Activated T-helper 2 cell treated with anti-CD3 and anti-CD28 coated beads, Interferon-gamma antibody, Interleukin-2, Interleukin-4, amounts not matched to agents 10 μg/mL and 5 μg/mL and 100 μg/mL, durations not matched to agents 14 hours and 24 hours and 36 hours (primary cell): ENCODE measurements at regions of chr12 and their contacts with region 1.

Region 1: GRCh38 chr12:27243804-27244683 is at the start of gene STK38L:
- DNase-seq: peak; percentile 96
- H3K4me3 Mint-ChIP-seq: peak within 1 kb of the TSS; percentile 96
- H3K27ac Mint-ChIP-seq: peak within 1 kb of the TSS; percentile 94
- H3K4me1 Mint-ChIP-seq: peaks cover 35% of the 10 kb centered on the region
- H3K27me3 Mint-ChIP-seq: no peaks in the 10 kb centered on the region
- total RNA-seq, gene STK38L: 23.4 and 24.2 TPM in 2 replicates

Region 2: DNA sequence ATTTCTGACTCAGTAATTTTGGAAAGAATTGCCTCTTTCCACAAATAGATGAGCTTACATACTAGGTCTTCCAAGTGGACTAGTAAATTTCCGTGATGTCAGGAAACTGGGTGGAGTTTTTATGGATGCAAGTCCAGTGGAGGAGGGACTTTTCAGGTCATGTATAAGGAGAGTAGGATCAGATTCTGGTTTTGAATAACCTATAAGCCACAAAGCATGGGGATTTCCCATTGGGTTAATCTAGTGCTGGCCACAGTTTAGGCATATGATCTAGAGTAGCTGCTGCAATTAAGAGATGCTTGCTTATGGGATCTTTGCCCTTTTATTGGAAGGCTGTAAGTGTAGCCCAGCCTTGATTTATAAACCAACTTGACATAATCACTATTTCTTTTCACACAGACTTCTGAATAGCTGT is 33.8 kb after region 1 on chr12:
- intact Hi-C with region 1: loop called (anchors 2 kb)
- DNase-seq: no peak
- H3K4me3 Mint-ChIP-seq: no peak overlapping the region
- H3K27ac Mint-ChIP-seq: peak overlapping the region; percentile 16
- H3K4me1 Mint-ChIP-seq: peaks cover 23% of the 10 kb centered on the region
- H3K27me3 Mint-ChIP-seq: no peaks in the 10 kb centered on the region

Region 3: DNA sequence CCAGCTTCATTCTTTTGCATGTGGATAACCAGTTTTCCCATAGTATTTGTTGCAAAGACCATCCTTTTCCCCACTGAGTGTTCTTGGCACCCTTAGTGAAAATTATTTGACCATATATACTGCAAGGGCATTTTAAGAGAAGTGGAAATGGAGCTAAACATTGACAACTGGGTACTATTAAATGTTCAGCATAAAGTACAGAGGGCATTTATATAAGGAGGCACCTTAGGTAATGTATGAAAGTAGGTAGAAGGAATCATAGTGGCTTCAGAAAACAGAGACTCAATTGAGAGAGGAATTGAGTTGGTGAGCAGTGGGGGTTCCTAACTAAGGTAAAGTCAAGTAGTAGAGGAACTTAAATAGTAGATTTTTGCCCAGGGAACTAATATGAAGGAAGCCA is 168.0 kb after region 1 on chr12:
- intact Hi-C with region 1: no loop called
- DNase-seq: no peak
- H3K4me3 Mint-ChIP-seq: no peak overlapping the region
- H3K27ac Mint-ChIP-seq: no peak overlapping the region
- H3K4me1 Mint-ChIP-seq: no peaks in the 10 kb centered on the region
- H3K27me3 Mint-ChIP-seq: no peaks in the 10 kb centered on the region